ENCODE measurements at regions of chr4 and their contacts with region 1.

Region 1: GRCh38 chr4:75673027-75673958 is at the start of gene G3BP2:
- DNase-seq: peak; percentile 95 to 100 (median 97)
- ATAC-seq: peak; percentile 91
- H3K4me3 ChIP-seq: peak within 1 kb of the TSS; percentile 83
- H3K4me3 Mint-ChIP-seq: peak within 1 kb of the TSS; percentile 97
- H3K27ac ChIP-seq: peak within 1 kb of the TSS; percentile 97 to 98
- H3K27ac Mint-ChIP-seq: peak within 1 kb of the TSS; percentile 99
- H3K4me1 ChIP-seq: peaks cover 26% of the 10 kb centered on the region
- H3K4me1 Mint-ChIP-seq: peaks cover 57% of the 10 kb centered on the region
- H3K27me3 ChIP-seq: no peaks in the 10 kb centered on the region
- H3K27me3 Mint-ChIP-seq: no peaks in the 10 kb centered on the region
- CTCF ChIP-seq: no peak
- total RNA-seq, gene G3BP2: 319 to 322 TPM

Region 2: DNA sequence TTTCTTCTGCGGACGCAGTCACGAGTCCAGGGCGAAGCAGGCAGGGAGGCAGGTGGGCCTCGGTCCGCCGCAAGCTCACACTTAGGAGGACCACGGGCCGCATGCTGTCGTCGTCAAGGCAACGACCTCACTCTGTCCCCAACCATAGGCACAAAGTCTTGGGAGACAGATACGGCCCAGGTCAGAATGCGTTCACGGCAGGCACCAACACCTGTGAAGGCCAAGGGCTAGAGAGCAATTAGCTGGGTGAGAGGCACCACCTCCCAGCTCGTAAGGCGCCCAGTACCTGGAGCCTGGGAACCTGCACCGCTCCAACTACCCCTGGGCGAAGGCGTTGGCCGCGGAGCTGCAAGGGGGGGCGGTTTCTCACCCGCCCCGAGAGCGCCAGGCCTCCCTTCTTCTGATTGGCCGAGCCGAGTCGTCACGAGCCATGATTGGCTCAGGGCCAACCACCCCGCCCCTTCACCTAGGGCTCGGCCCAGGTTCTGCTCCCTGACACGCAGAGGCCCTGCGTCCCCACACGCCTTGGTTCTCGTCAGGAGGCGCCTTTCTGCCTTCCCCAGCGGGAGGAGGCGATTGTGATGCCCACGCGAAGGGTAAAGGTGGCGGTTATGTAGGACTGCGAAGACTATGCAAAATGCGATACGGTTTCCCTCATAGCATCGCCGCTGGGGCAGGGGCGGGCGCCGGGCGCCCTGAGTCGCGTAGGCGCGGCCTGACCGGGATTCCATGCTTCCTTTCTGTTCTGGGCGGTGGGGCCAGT is 42.9 kb before region 1 on chr4 and contains the start of gene CDKL2:
- CTCF ChIA-PET with region 1: no interaction called
- POLR2A ChIA-PET with region 1: interaction called, 11 read pairs
- intact Hi-C with region 1: loop called (anchors 2 to 5 kb)
- DNase-seq: peak; percentile 88 to 96 (median 92)
- ATAC-seq: peak; percentile 99
- H3K4me3 ChIP-seq: peak within 1 kb of the TSS; percentile 85
- H3K4me3 Mint-ChIP-seq: peak within 1 kb of the TSS; percentile 90
- H3K27ac ChIP-seq: peak within 1 kb of the TSS in 1 of 2 donors; percentile 48
- H3K27ac Mint-ChIP-seq: peak within 1 kb of the TSS; percentile 75
- H3K4me1 ChIP-seq: peaks cover 16% of the 10 kb centered on the region
- H3K4me1 Mint-ChIP-seq: peaks cover 12% of the 10 kb centered on the region
- H3K27me3 ChIP-seq: no peaks in the 10 kb centered on the region
- H3K27me3 Mint-ChIP-seq: no peaks in the 10 kb centered on the region
- CTCF ChIP-seq: no peak
- total RNA-seq, gene CDKL2: 0.38 to 0.92 TPM

Region 3: DNA sequence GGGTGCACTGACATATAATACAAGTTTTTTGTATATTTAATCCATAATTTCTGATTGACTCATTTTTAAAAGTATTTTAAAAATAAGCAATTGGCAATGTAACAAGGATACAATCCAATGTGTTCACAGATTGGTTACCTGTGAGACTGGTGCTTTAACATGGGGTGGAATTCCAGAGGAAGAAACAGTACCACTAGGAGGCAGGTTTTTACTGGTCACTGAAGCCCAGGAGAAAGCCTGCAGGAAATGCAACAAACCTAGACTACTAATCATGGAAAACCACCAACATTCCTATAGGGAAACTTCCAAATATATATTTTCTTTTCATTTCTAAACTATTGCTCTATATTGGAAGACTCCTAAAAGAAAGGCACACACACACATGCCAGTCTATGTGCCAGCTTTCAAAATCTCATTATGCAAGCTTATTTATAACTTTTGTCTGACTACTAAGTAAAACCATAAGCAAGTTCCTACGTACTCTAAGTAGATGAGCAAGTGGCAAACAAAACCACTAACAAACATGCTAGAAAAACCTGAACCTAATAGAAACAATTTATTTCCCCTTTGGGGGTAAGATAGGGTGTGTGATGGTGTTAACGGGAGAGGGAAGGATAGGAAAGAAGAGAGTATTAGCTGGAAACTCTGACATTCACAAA is 19.3 kb before region 1 on chr4:
- CTCF ChIA-PET with region 1: interaction called, 5 read pairs
- POLR2A ChIA-PET with region 1: interaction called, 24 read pairs
- intact Hi-C with region 1: loop called in 1 of 2 experiments (anchors 1 kb)
- DNase-seq: peak in 3 of 14 experiments; percentile 27 to 34 (median 29)
- ATAC-seq: no peak
- H3K4me3 ChIP-seq: no peak overlapping the region
- H3K4me3 Mint-ChIP-seq: no peak overlapping the region
- H3K27ac ChIP-seq: peak overlapping the region in 1 of 2 donors; percentile 9
- H3K27ac Mint-ChIP-seq: peak overlapping the region; percentile 78
- H3K4me1 ChIP-seq: peaks cover 5% of the 10 kb centered on the region
- H3K4me1 Mint-ChIP-seq: peaks cover 53% of the 10 kb centered on the region
- H3K27me3 ChIP-seq: no peaks in the 10 kb centered on the region
- H3K27me3 Mint-ChIP-seq: no peaks in the 10 kb centered on the region
- CTCF ChIP-seq: peak; percentile 29

Region 4: GRCh38 chr4:75698162-75698962 is 25.1 kb after region 1 on chr4:
- CTCF ChIA-PET with region 1: no interaction called
- POLR2A ChIA-PET with region 1: interaction called, 6 read pairs
- intact Hi-C with region 1: loop called in 1 of 2 experiments (anchors 2 kb)
- DNase-seq: peak in 3 of 14 experiments; percentile 41 to 62 (median 57)
- ATAC-seq: peak; percentile 20
- H3K4me3 ChIP-seq: no peak overlapping the region
- H3K4me3 Mint-ChIP-seq: no peak overlapping the region
- H3K27ac ChIP-seq: peak overlapping the region; percentile 15 to 35
- H3K27ac Mint-ChIP-seq: peak overlapping the region; percentile 52
- H3K4me1 ChIP-seq: peaks cover 23% of the 10 kb centered on the region
- H3K4me1 Mint-ChIP-seq: peaks cover 45% of the 10 kb centered on the region
- H3K27me3 ChIP-seq: no peaks in the 10 kb centered on the region
- H3K27me3 Mint-ChIP-seq: no peaks in the 10 kb centered on the region
- CTCF ChIP-seq: no peak

Region 5: GRCh38 chr4:75989846-75990528 is 316.7 kb after region 1 on chr4:
- CTCF ChIA-PET with region 1: no interaction called
- POLR2A ChIA-PET with region 1: interaction called, 3 read pairs
- intact Hi-C with region 1: loop called in 1 of 2 experiments (anchors 2 kb)
- DNase-seq: peak in 3 of 14 experiments; percentile 10 to 23 (median 21)
- ATAC-seq: no peak
- H3K4me3 ChIP-seq: peak overlapping the region; percentile 95
- H3K4me3 Mint-ChIP-seq: peak overlapping the region; percentile 99
- H3K27ac ChIP-seq: peak overlapping the region; percentile 37 to 52
- H3K27ac Mint-ChIP-seq: peak overlapping the region; percentile 93
- H3K4me1 ChIP-seq: peaks cover 40% of the 10 kb centered on the region
- H3K4me1 Mint-ChIP-seq: peaks cover 42% of the 10 kb centered on the region
- H3K27me3 ChIP-seq: no peaks in the 10 kb centered on the region
- H3K27me3 Mint-ChIP-seq: no peaks in the 10 kb centered on the region
- CTCF ChIP-seq: no peak

Region 6: GRCh38 chr4:76002176-76002575 is 328.9 kb after region 1 on chr4:
- CTCF ChIA-PET with region 1: no interaction called
- POLR2A ChIA-PET with region 1: no interaction called
- intact Hi-C with region 1: no loop called
- DNase-seq: peak in 2 of 14 experiments; percentile 10 to 21
- ATAC-seq: no peak
- H3K4me3 ChIP-seq: no peak overlapping the region
- H3K4me3 Mint-ChIP-seq: no peak overlapping the region
- H3K27ac ChIP-seq: no peak overlapping the region
- H3K27ac Mint-ChIP-seq: no peak overlapping the region
- H3K4me1 ChIP-seq: no peaks in the 10 kb centered on the region
- H3K4me1 Mint-ChIP-seq: no peaks in the 10 kb centered on the region
- H3K27me3 ChIP-seq: no peaks in the 10 kb centered on the region
- H3K27me3 Mint-ChIP-seq: peaks cover 6% of the 10 kb centered on the region
- CTCF ChIP-seq: no peak